ENCODE measurements at regions of chr12 and their contacts with region 1.

Region 1: GRCh38 chr12:49347384-49348237 is 923 bp downstream of the DNAJC22 start:
- DNase-seq: peak; percentile 65 to 86 (median 74)
- ATAC-seq: peak; percentile 78
- H3K4me3 ChIP-seq: peak overlapping the region; percentile 53
- H3K4me3 Mint-ChIP-seq: peak overlapping the region; percentile 83
- H3K27ac ChIP-seq: no peak overlapping the region
- H3K27ac Mint-ChIP-seq: no peak overlapping the region
- H3K4me1 ChIP-seq: peaks cover 56% of the 10 kb centered on the region
- H3K4me1 Mint-ChIP-seq: peaks cover 39% of the 10 kb centered on the region
- H3K27me3 ChIP-seq: peaks cover 81 to 82% of the 10 kb centered on the region in 2 experiments
- H3K27me3 Mint-ChIP-seq: peaks cover 88% of the 10 kb centered on the region
- CTCF ChIP-seq: peak; percentile 99

Region 2: DNA sequence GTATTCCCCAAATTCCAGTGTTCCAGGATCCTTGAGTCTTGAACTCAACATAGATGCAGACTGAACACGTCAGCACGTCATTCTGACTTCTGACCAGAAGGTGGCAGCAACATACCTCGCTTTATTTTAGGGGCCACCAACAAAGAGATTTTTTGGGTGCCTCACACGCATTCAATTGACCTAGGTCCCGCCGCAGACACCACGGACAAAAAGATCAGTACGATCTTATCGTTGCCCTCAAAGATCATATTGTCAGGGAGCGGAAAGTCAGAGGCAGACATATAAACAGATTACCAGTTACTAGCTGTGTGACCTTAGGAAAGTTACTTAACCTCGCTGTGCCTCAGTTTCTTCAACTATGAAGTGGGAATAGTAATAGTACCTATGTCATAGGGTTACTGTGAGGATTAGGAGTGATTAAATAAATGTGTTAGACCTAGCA is 59.2 kb before region 1 on chr12:
- CTCF ChIA-PET with region 1: interaction called, 42 read pairs
- POLR2A ChIA-PET with region 1: interaction called, 5 read pairs
- intact Hi-C with region 1: loop called (anchors 1 kb)
- DNase-seq: peak; percentile 50 to 86 (median 64)
- ATAC-seq: peak; percentile 76
- H3K4me3 ChIP-seq: no peak overlapping the region
- H3K4me3 Mint-ChIP-seq: no peak overlapping the region
- H3K27ac ChIP-seq: no peak overlapping the region
- H3K27ac Mint-ChIP-seq: no peak overlapping the region
- H3K4me1 ChIP-seq: no peaks in the 10 kb centered on the region
- H3K4me1 Mint-ChIP-seq: no peaks in the 10 kb centered on the region
- H3K27me3 ChIP-seq: peaks cover 2 to 23% of the 10 kb centered on the region in 2 experiments
- H3K27me3 Mint-ChIP-seq: peaks cover 44% of the 10 kb centered on the region
- CTCF ChIP-seq: peak; percentile 94

Region 3: DNA sequence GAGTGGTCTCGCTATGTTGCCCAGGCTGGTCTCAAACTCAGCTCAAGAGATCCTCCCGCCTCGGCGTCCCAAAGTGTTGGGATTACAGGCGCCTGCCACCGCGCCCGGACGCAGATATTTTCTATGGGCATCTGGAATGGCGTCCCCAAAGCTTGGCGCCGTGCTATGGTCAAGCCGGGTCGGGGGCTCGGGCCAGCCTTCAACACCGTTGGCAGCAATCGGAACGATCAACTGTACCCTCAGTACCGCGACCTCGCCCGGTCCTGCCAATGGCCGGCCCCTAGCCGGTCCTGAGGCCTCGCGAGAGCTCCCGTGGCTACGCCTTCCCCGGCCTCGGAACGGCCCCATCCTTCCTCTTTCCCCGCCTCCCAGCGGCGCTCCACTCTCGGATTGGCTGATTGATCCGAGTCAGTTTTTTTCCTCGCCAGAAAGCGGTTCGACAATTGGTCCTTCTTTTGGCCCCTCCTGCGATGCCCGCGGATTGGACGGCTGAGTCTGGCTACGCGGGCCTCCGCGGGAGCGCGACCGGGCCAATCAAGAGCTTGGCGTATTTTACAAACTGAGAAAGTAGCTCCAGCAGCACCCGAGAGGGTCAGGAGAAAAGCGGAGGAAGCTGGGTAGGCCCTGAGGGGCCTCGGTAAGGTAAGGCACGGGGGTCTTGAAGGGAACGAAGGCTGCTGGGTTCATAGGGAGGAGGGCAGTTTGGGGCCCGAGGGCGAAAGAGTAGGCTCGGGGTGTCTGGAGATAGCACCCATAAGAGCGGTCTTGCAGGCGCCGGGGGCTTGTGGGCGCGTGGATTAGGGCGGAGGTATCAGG is 24.7 kb before region 1 on chr12 and contains the start of gene TROAP:
- CTCF ChIA-PET with region 1: interaction called, 19 read pairs
- POLR2A ChIA-PET with region 1: interaction called, 17 read pairs
- intact Hi-C with region 1: no loop called
- DNase-seq: peak; percentile 93 to 99 (median 95)
- ATAC-seq: peak; percentile 95
- H3K4me3 ChIP-seq: peak within 1 kb of the TSS; percentile 89
- H3K4me3 Mint-ChIP-seq: peak within 1 kb of the TSS; percentile 90
- H3K27ac ChIP-seq: peak within 1 kb of the TSS in 1 of 2 donors; percentile 3
- H3K27ac Mint-ChIP-seq: peak within 1 kb of the TSS; percentile 56
- H3K4me1 ChIP-seq: peaks cover 19% of the 10 kb centered on the region
- H3K4me1 Mint-ChIP-seq: peaks cover 19% of the 10 kb centered on the region
- H3K27me3 ChIP-seq: no peaks in the 10 kb centered on the region
- H3K27me3 Mint-ChIP-seq: no peaks in the 10 kb centered on the region
- CTCF ChIP-seq: no peak
- total RNA-seq, gene TROAP: 0.30 to 0.31 TPM

Region 4: DNA sequence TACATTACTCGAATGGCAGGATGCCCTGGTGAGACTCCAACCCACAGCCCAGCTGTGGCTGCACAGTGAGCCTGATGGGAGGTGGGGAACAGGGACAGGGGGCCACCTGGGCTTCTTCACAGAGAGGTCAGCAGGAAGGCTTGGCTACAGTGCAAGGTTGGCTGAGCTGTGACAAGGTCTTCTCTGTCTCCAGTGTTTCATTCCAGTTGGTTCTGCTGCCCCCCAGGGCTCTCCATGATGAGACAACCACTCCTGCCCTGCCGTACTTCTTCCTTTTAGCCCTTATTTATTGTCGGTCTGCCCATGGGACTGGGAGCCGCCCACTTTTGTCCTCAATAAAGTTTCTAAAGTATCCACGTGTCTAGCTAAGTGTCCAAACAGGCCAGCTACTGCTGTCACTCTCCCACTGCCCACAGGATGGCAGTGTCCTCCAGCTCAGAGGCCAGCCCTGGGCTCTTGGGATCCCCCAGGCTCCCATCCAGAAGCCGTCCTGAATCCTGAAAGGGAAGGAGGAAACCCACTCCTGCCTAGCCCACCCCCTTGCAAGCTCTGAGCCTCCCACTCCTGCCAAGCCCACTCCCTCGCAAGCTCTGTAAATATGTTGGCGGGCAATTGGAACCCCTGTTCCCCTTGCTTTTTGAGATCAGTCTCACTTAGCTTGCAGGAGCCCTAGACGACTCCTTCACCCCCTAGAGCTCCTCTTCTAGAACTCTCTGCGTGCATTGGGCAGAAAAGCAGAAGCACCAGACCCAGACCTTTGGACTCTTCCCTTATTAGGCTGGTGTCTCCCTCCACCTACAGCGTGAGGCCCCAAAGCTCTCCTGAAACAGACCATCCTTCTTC is 16.0 kb before region 1 on chr12:
- CTCF ChIA-PET with region 1: interaction called, 28 read pairs
- POLR2A ChIA-PET with region 1: interaction called, 7 read pairs
- intact Hi-C with region 1: no loop called
- DNase-seq: peak in 3 of 14 experiments; percentile 37 to 48 (median 48)
- ATAC-seq: peak; percentile 56
- H3K4me3 ChIP-seq: no peak overlapping the region
- H3K4me3 Mint-ChIP-seq: no peak overlapping the region
- H3K27ac ChIP-seq: no peak overlapping the region
- H3K27ac Mint-ChIP-seq: no peak overlapping the region
- H3K4me1 ChIP-seq: peaks cover 13% of the 10 kb centered on the region
- H3K4me1 Mint-ChIP-seq: peaks cover 18% of the 10 kb centered on the region
- H3K27me3 ChIP-seq: peaks cover 34 to 36% of the 10 kb centered on the region in 2 experiments
- H3K27me3 Mint-ChIP-seq: peaks cover 49% of the 10 kb centered on the region
- CTCF ChIP-seq: no peak

Region 5: GRCh38 chr12:49336645-49337584 is 10.7 kb before region 1 on chr12 and contains the start of gene C1QL4:
- CTCF ChIA-PET with region 1: interaction called, 28 read pairs
- POLR2A ChIA-PET with region 1: interaction called, 7 read pairs
- intact Hi-C with region 1: no loop called
- DNase-seq: peak; percentile 79 to 93 (median 87)
- ATAC-seq: peak; percentile 97
- H3K4me3 ChIP-seq: peak within 1 kb of the TSS; percentile 48
- H3K4me3 Mint-ChIP-seq: peak within 1 kb of the TSS; percentile 85
- H3K27ac ChIP-seq: no peak within 1 kb of the TSS
- H3K27ac Mint-ChIP-seq: no peak within 1 kb of the TSS
- H3K4me1 ChIP-seq: peaks cover 33% of the 10 kb centered on the region
- H3K4me1 Mint-ChIP-seq: peaks cover 42% of the 10 kb centered on the region
- H3K27me3 ChIP-seq: peaks cover 60 to 70% of the 10 kb centered on the region in 2 experiments
- H3K27me3 Mint-ChIP-seq: peaks cover 88% of the 10 kb centered on the region
- CTCF ChIP-seq: peak; percentile 98
- total RNA-seq, gene C1QL4: not detected

Region 6: GRCh38 chr12:49358483-49359141 is 11.0 kb after region 1 on chr12:
- CTCF ChIA-PET with region 1: interaction called, 47 read pairs
- POLR2A ChIA-PET with region 1: interaction called, 3 read pairs
- intact Hi-C with region 1: no loop called
- DNase-seq: peak in 8 of 14 experiments; percentile 31 to 86 (median 62)
- ATAC-seq: peak; percentile 96
- H3K4me3 ChIP-seq: no peak overlapping the region
- H3K4me3 Mint-ChIP-seq: peak overlapping the region; percentile 34
- H3K27ac ChIP-seq: no peak overlapping the region
- H3K27ac Mint-ChIP-seq: no peak overlapping the region
- H3K4me1 ChIP-seq: peaks cover 3% of the 10 kb centered on the region
- H3K4me1 Mint-ChIP-seq: peaks cover 7% of the 10 kb centered on the region
- H3K27me3 ChIP-seq: peaks cover 9 to 12% of the 10 kb centered on the region in 2 experiments
- H3K27me3 Mint-ChIP-seq: peaks cover 29% of the 10 kb centered on the region
- CTCF ChIP-seq: peak; percentile 78

Region 7: DNA sequence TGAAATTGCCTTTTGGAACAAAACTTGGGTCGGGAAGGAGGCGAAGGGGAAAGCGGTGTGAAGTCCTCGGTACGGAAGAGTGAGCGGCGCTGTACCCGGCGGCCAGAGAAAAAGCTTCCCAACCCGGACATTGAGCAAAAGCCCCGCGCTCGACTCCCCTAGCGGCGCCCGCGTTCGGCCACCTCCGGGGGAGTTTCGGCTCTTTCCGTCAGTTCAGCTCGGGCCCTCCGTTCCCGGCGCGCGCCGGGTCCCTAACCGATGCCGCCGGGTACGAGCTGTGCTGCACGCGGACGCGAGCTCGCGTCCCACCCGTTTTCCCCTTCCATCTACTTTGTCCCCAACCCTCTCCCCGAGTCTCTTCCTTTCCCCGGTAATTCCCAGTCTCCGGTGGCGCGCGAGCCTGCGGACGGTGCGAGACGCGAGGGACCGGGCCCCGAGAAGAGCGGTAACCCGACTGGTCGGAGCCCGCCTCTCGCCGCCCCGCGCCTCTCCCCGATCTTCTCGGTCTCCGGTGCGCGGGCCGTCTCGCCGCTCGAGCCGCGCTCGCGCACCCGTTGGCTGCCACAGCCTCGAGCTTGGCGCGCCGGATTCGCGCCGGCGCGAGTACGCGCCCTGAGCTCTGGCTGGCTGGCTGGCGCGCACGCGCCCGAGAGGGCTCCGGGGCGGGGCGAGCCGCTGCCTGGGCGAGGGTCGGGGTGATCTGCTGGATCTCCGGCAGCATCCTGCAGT is 19.2 kb after region 1 on chr12:
- CTCF ChIA-PET with region 1: interaction called, 33 read pairs
- POLR2A ChIA-PET with region 1: interaction called, 13 read pairs
- intact Hi-C with region 1: no loop called
- DNase-seq: peak; percentile 69 to 92 (median 81)
- ATAC-seq: peak; percentile 82
- H3K4me3 ChIP-seq: peak overlapping the region; percentile 88
- H3K4me3 Mint-ChIP-seq: peak overlapping the region; percentile 99
- H3K27ac ChIP-seq: peak overlapping the region; percentile 66 to 70
- H3K27ac Mint-ChIP-seq: peak overlapping the region; percentile 76
- H3K4me1 ChIP-seq: peaks cover 15% of the 10 kb centered on the region
- H3K4me1 Mint-ChIP-seq: peaks cover 30% of the 10 kb centered on the region
- H3K27me3 ChIP-seq: no peaks in the 10 kb centered on the region
- H3K27me3 Mint-ChIP-seq: no peaks in the 10 kb centered on the region
- CTCF ChIP-seq: no peak

Region 8: DNA sequence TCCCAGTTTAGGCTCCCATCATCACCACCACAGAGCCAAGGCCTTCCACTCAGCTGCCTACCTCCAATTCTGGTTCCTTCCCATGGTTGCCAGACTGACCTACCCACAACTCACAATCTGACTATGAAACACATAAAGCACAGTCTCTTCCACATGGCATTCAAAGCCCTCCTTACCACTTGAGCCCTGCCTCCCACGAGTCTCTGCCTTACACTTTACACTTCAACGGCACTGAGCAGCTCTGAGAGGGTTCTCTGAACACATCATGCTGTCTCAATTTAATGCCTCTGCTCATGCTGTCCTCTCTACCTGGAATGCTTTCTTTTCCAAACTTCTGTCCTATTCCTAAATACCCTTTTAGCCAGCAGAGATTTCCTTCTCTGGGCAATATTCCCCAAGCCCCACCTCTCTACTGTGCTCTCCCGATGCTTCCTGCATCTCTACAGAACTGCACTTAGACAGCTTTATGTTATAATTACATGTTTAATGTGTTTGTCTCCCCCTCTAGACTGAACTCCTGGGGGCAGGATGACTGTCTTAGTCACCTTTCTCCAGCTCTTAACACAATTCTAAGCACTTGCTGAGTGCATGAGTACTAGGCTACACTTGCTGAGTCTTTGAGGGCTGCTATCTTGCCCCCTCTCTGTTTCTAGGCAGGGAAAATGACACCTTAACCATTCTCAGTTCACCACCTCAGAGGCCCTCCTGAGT is 336.1 kb after region 1 on chr12:
- CTCF ChIA-PET with region 1: no interaction called
- POLR2A ChIA-PET with region 1: no interaction called
- intact Hi-C with region 1: no loop called
- DNase-seq: no peak
- ATAC-seq: peak; percentile 34
- H3K4me3 ChIP-seq: no peak overlapping the region
- H3K4me3 Mint-ChIP-seq: no peak overlapping the region
- H3K27ac ChIP-seq: no peak overlapping the region
- H3K27ac Mint-ChIP-seq: peak overlapping the region; percentile 6
- H3K4me1 ChIP-seq: peaks cover 7% of the 10 kb centered on the region
- H3K4me1 Mint-ChIP-seq: peaks cover 60% of the 10 kb centered on the region
- H3K27me3 ChIP-seq: no peaks in the 10 kb centered on the region
- H3K27me3 Mint-ChIP-seq: no peaks in the 10 kb centered on the region
- CTCF ChIP-seq: no peak